PC-3 (cell line): ENCODE measurements at regions of chr13 and their contacts with region 1.

Region 1: GRCh38 chr13:77697217-77698103 is at the start of gene SLAIN1:
- DNase-seq: peak; percentile 67
- ATAC-seq: peak; percentile 68
- H3K4me3 ChIP-seq: peak within 1 kb of the TSS; percentile 81
- H3K27ac ChIP-seq: no peak within 1 kb of the TSS
- H3K4me1 ChIP-seq: peaks cover 20% of the 10 kb centered on the region
- H3K27me3 ChIP-seq: peaks cover 30% of the 10 kb centered on the region
- CTCF ChIP-seq: no peak
- total RNA-seq, gene SLAIN1: 5.0 and 12.7 TPM in 2 replicates

Region 2: GRCh38 chr13:76828316-76828741 is 869.1 kb before region 1 on chr13:
- CTCF ChIA-PET with region 1: no interaction called
- POLR2A ChIA-PET with region 1: no interaction called
- intact Hi-C with region 1: no loop called
- DNase-seq: no peak
- ATAC-seq: no peak
- H3K4me3 ChIP-seq: no peak overlapping the region
- H3K27ac ChIP-seq: no peak overlapping the region
- H3K4me1 ChIP-seq: peaks cover 4% of the 10 kb centered on the region; the same call in 1 of the 2 replicates
- H3K27me3 ChIP-seq: no peaks in the 10 kb centered on the region
- CTCF ChIP-seq: no peak

Region 3: GRCh38 chr13:77372275-77372674 is 325.2 kb before region 1 on chr13:
- CTCF ChIA-PET with region 1: no interaction called
- POLR2A ChIA-PET with region 1: no interaction called
- intact Hi-C with region 1: no loop called
- DNase-seq: no peak
- ATAC-seq: no peak
- H3K4me3 ChIP-seq: no peak overlapping the region
- H3K27ac ChIP-seq: no peak overlapping the region
- H3K4me1 ChIP-seq: no peaks in the 10 kb centered on the region
- H3K27me3 ChIP-seq: no peaks in the 10 kb centered on the region
- CTCF ChIP-seq: no peak

Region 4: GRCh38 chr13:77599351-77599750 is 98.1 kb before region 1 on chr13:
- CTCF ChIA-PET with region 1: no interaction called
- POLR2A ChIA-PET with region 1: no interaction called
- intact Hi-C with region 1: loop called (anchors 5 kb)
- DNase-seq: no peak
- ATAC-seq: no peak
- H3K4me3 ChIP-seq: no peak overlapping the region
- H3K27ac ChIP-seq: no peak overlapping the region
- H3K4me1 ChIP-seq: no peaks in the 10 kb centered on the region
- H3K27me3 ChIP-seq: no peaks in the 10 kb centered on the region
- CTCF ChIP-seq: no peak

Region 5: DNA sequence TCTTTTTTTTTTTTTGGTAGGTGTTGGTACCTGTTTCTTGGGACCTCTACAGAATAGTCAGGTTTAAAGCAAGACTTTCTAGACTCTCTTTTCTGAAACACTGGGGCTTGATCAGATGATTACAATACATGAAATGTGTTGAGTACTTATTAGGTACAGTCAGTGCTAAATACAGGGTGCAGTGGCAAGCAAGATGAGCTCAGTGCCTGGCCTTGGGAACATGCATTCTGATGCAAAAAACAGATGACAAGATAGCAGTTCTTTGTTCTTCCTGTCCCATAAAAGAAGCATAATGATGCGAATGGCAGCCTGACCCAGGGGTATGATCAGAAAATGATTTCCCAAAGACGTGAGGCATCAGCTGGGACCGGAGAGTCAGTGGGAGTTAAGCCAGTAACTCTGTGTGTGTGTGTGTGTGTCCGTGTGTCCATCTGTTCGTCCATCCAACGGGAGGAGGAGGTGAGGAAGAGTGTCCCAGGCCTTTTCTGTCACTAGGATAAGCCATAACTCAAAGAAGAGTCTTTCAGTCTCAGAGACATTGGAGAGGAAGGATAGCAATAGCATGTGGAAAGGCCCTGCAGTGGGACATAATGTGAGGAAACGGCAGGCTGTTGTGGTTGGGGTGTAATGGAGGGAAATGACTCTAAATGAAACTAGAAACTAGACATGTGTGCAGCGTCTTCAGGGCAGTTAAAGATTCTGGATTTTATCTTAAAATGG is 32.2 kb after region 1 on chr13:
- CTCF ChIA-PET with region 1: no interaction called
- POLR2A ChIA-PET with region 1: no interaction called
- intact Hi-C with region 1: no loop called
- DNase-seq: no peak
- ATAC-seq: no peak
- H3K4me3 ChIP-seq: no peak overlapping the region
- H3K27ac ChIP-seq: no peak overlapping the region
- H3K4me1 ChIP-seq: no peaks in the 10 kb centered on the region
- H3K27me3 ChIP-seq: no peaks in the 10 kb centered on the region
- CTCF ChIP-seq: no peak

Region 6: GRCh38 chr13:77928909-77929308 is 231.4 kb after region 1 on chr13:
- CTCF ChIA-PET with region 1: no interaction called
- POLR2A ChIA-PET with region 1: no interaction called
- intact Hi-C with region 1: no loop called
- DNase-seq: peak; percentile 31
- ATAC-seq: no peak
- H3K4me3 ChIP-seq: no peak overlapping the region
- H3K27ac ChIP-seq: no peak overlapping the region
- H3K4me1 ChIP-seq: no peaks in the 10 kb centered on the region
- H3K27me3 ChIP-seq: no peaks in the 10 kb centered on the region
- CTCF ChIP-seq: no peak